PC-3 (cell line): ENCODE measurements at regions of chr2 and their contacts with region 1.

Region 1: DNA sequence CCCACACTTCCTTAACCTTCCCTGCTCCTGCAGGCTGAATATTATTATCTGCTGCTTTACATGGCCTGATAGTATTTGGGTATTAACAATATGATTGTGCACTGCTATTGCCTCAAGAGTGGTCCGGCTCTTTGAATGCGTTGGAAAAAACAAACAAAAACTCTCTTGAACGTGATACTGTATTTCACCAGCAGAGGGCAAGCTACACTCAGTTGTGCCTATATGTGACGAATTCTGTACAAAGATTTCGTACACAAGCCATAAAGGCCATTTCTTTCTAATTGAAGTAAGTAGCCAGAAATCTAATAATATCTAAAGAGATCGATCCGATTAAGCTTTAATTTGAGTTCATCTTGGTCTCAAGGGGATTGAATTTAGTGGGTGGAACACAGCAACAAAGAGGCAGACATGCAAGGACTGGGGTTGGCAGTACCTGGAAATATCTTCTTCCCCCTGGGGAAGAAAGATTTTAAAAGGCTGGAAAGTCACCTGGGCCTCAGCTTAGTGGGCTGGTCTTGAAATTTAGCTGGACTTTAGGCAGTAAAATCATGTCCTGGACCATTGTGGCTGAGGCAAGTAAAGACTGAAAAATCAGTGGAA is 49.3 kb upstream of the RAB6D start:
- DNase-seq: peak; percentile 81
- ATAC-seq: peak; percentile 68
- H3K4me3 ChIP-seq: no peak overlapping the region
- H3K27ac ChIP-seq: no peak overlapping the region
- H3K4me1 ChIP-seq: no peaks in the 10 kb centered on the region
- H3K27me3 ChIP-seq: peaks cover 65% of the 10 kb centered on the region
- CTCF ChIP-seq: peak; percentile 87

Region 2: DNA sequence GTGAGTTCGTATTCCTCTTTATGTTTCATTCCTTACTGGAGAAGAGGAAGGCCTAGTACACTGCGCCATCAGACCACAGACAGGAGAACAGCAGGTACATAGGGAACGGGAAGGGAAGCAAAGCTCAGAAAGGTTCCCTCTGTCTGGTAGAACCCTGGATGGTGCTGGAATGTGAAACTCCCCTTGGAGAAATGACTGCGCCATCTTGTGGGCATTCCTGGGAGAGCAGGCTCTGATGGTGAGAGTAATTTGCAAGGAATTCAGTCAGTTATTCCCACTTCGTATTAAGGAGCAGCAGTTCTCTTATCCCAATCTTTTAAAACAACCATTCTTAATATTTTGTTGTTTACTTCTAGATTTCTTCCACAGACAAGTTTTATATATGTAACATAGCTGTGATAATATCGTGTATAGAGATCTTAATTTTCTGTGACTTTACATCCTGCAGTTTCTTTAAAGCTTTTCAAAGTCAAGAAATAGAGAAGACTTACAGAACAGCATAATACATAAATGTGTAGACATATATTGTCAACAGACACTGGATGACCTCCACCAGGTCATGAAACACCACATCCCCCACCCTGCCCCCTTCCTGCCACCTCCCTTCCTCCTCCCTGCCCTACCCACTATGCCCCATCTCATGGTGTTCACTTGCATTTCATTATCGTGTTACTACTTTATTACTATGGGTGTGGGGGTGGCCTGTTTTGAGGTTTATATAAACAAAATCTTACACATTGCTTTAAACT is 492.7 kb before region 1 on chr2:
- CTCF ChIA-PET with region 1: no interaction called
- POLR2A ChIA-PET with region 1: no interaction called
- intact Hi-C with region 1: no loop called
- DNase-seq: peak; percentile 87
- ATAC-seq: peak; percentile 88
- H3K4me3 ChIP-seq: no peak overlapping the region
- H3K27ac ChIP-seq: no peak overlapping the region
- H3K4me1 ChIP-seq: no peaks in the 10 kb centered on the region
- H3K27me3 ChIP-seq: no peaks in the 10 kb centered on the region
- CTCF ChIP-seq: peak; percentile 94

Region 3: DNA sequence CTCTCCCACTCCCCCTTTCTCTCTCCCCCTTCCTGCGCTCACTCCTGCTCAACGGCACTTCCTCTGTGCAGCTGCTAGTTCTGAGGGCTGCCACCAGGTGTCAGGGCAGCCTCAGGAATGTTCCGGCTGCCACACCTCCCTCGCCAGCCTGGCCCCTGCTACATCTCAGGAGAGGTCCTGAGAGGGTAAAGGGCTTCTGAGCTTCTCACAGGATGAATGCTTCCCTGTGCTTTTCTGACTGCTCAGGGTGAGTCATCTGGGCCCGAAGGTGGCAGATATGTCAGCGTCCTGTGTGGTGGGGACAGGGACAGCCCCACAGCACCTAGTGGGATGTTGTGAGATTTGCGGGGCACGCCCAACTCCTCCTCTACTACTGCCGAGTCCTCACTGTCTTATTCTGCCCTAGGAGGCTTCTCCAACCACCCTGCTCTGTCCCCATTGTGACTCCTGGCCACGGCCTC is 259.1 kb before region 1 on chr2:
- CTCF ChIA-PET with region 1: no interaction called
- POLR2A ChIA-PET with region 1: no interaction called
- intact Hi-C with region 1: loop called (anchors 1 kb)
- DNase-seq: peak; percentile 77
- ATAC-seq: peak; percentile 84
- H3K4me3 ChIP-seq: no peak overlapping the region
- H3K27ac ChIP-seq: no peak overlapping the region
- H3K4me1 ChIP-seq: no peaks in the 10 kb centered on the region
- H3K27me3 ChIP-seq: 0 out of 2 replicates have a peak, but pooled peaks cover 3% of the 10 kb centered on the region
- CTCF ChIP-seq: peak; percentile 95

Region 4: DNA sequence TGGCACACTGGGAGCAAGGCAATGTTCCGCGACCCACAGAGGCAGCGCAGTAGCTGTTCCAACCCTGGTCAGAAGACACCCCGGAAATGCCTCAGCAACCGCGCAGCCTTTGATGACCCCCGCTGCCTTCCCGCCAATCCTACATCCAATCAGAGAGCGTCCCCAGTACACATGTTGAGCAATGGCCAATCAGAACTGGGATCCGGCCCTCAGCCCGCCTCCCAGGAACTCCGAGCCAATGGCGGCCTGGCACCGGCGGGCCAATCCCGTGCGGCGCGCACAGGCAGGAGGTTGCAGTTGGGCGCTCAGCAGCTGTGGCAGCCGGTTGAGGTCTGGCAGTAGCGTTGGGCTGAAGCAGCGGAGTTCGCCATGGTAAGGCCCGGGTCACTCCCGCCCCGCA is 62.6 kb after region 1 on chr2 and contains the start of gene TUBA3D:
- CTCF ChIA-PET with region 1: no interaction called
- POLR2A ChIA-PET with region 1: no interaction called
- intact Hi-C with region 1: no loop called
- DNase-seq: no peak
- ATAC-seq: no peak
- H3K4me3 ChIP-seq: no peak within 1 kb of the TSS
- H3K27ac ChIP-seq: no peak within 1 kb of the TSS
- H3K4me1 ChIP-seq: no peaks in the 10 kb centered on the region
- H3K27me3 ChIP-seq: no peaks in the 10 kb centered on the region
- CTCF ChIP-seq: no peak
- total RNA-seq, gene TUBA3D: not detected in 2 replicates

Region 5: DNA sequence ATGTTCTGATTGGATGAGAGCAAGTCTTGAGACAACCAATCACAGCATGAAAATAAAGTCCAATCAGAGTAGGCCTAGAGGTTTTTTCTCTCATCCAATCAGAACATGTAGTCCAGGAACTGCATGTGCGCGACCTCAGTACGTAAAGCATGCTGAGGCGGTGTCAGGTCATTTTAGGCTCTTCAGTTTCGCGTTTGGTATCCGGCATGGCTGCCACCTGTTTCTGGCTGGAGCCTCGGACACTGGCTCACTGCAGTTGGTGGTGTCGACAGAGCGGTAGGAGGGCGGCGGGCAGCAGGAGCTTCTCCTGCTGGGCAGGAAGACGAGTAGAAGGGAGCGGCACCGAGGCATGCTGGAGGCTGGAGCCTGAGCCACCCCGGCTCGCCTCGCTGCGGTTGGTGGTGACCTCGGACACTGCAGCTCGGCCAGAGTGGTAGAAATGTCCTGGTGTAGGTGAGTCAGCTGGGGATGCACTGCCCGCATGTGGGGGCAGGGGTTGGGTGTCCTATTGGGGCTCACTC is 130.2 kb after region 1 on chr2:
- CTCF ChIA-PET with region 1: no interaction called
- POLR2A ChIA-PET with region 1: no interaction called
- intact Hi-C with region 1: loop called (anchors 10 kb)
- DNase-seq: no peak
- ATAC-seq: no peak
- H3K4me3 ChIP-seq: no peak overlapping the region
- H3K27ac ChIP-seq: no peak overlapping the region
- H3K4me1 ChIP-seq: no peaks in the 10 kb centered on the region
- H3K27me3 ChIP-seq: peaks cover 28% of the 10 kb centered on the region
- CTCF ChIP-seq: no peak